BJ (cell line): ENCODE measurements at regions of chr1 and their contacts with region 1.

Region 1: GRCh38 chr1:212608209-212608955 is at the start of gene ATF3:
- DNase-seq: peak; percentile 96
- H3K4me3 ChIP-seq: peak within 1 kb of the TSS; percentile 68
- H3K27me3 ChIP-seq: peaks cover 36% of the 10 kb centered on the region
- CTCF ChIP-seq: no peak
- polyA plus RNA-seq, gene ATF3: 4.5 and 5.6 TPM in 2 replicates

Region 2: GRCh38 chr1:212529211-212529741 is 79.1 kb before region 1 on chr1:
- CTCF ChIA-PET with region 1: no interaction called
- POLR2A ChIA-PET with region 1: interaction called, 17 read pairs
- DNase-seq: no peak
- H3K4me3 ChIP-seq: no peak overlapping the region
- H3K27me3 ChIP-seq: peaks cover 13% of the 10 kb centered on the region
- CTCF ChIP-seq: no peak

Region 3: DNA sequence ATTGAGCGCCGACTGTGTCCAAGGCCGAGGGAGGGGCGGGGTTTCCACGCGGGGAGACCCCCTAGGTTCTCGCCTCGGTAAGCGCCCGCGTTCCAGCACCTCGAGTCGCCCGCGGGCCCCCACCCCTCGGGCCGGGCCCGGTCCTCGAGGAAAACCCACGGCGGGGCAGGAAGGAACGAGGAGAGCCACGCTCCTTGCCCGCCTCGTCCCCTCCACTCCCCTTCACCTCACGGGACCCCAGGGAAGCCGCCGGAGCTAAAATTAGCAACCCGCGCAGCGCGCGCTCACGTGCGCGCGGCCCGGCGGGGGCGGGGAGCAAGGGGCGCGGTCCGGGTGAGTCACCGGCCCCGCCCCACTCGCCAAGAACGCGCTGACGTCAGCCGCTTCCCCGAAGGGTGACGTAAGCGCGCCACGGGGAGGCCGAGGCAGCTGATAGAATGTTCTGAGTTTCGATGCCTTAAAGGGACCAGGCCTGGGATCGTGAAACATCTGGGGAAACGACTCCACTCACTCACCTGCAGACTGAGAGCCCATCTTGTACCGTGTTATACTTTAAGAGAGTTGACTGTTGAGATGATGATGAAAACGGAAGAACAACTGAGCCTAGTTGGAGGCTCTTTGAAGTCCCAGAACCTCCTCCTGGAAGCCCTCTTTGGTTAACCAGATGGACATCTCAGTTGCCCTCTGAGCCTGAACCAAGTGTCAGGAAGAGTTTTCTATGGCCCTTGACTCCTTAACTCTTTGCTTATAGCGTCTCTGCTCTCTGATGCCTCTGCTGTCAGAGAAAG is 49.5 kb before region 1 on chr1:
- CTCF ChIA-PET with region 1: no interaction called
- POLR2A ChIA-PET with region 1: interaction called, 16 read pairs
- DNase-seq: peak; percentile 35
- H3K4me3 ChIP-seq: peak overlapping the region; percentile 76
- H3K27me3 ChIP-seq: peaks cover 2% of the 10 kb centered on the region; the same call in 1 of the 2 replicates
- CTCF ChIP-seq: no peak

Region 4: GRCh38 chr1:212595787-212596714 is 12.3 kb before region 1 on chr1:
- CTCF ChIA-PET with region 1: interaction called, 10 read pairs
- POLR2A ChIA-PET with region 1: interaction called, 8 read pairs
- DNase-seq: peak; percentile 98
- H3K4me3 ChIP-seq: 0 out of 2 replicates have a peak overlapping the region, but pooled peaks have one; percentile 4
- H3K27me3 ChIP-seq: peaks cover 9% of the 10 kb centered on the region
- CTCF ChIP-seq: peak; percentile 61

Region 5: GRCh38 chr1:212630158-212630900 is 21.9 kb after region 1 on chr1:
- CTCF ChIA-PET with region 1: interaction called, 31 read pairs
- POLR2A ChIA-PET with region 1: no interaction called
- DNase-seq: no peak
- H3K4me3 ChIP-seq: no peak overlapping the region
- H3K27me3 ChIP-seq: peaks cover 12% of the 10 kb centered on the region
- CTCF ChIP-seq: peak; percentile 88

Region 6: DNA sequence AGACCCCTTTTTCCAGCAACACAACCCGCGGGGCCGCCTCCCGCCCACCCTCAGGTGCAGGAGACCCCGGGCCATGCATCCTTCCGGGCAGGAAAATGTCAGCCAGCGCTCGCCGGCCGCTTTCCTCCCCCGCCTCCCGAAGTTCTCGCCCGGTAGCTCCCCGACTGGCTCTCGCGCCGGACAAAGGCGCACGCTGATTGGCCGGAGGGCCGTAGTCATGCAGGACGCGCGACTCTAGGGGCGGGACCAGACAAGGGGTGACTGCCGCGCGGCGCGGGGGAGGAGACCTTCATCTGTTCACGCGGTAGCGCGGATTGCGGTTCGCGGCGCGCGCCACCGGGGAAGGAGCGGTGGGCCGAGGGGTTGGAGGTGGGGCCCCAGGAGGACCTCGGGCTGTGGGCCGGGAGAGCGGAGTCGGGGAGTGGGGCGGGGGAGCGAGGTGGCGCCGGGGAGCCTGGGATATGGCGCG is 249.6 kb after region 1 on chr1 and contains the start of gene FLVCR1:
- CTCF ChIA-PET with region 1: no interaction called
- POLR2A ChIA-PET with region 1: interaction called, 13 read pairs
- DNase-seq: peak; percentile 67
- H3K4me3 ChIP-seq: peak within 1 kb of the TSS; percentile 99
- H3K27me3 ChIP-seq: no peaks in the 10 kb centered on the region
- CTCF ChIP-seq: no peak
- polyA plus RNA-seq, gene FLVCR1: 0.88 and 1.4 TPM in 2 replicates